ENCODE measurements at regions of chr13 and their contacts with region 1.

Region 1: GRCh38 chr13:78658635-78659449 is at the start of gene OBI1:
- DNase-seq: peak; percentile 88
- ATAC-seq: peak; percentile 98
- H3K4me3 Mint-ChIP-seq: peak within 1 kb of the TSS; percentile 100
- H3K27ac Mint-ChIP-seq: peak within 1 kb of the TSS; percentile 92
- H3K4me1 Mint-ChIP-seq: peaks cover 37% of the 10 kb centered on the region
- H3K27me3 Mint-ChIP-seq: no peaks in the 10 kb centered on the region
- CTCF ChIP-seq: no peak
- total RNA-seq, gene OBI1: 16.2 and 19.1 TPM in 2 replicates

Region 2: GRCh38 chr13:76991796-76992547 is 1666.9 kb before region 1 on chr13 and contains the start of gene CLN5:
- CTCF ChIA-PET with region 1: no interaction called
- POLR2A ChIA-PET with region 1: no interaction called
- intact Hi-C with region 1: loop called (anchors 2 kb)
- DNase-seq: peak; percentile 93
- ATAC-seq: peak; percentile 95
- H3K4me3 Mint-ChIP-seq: peak within 1 kb of the TSS; percentile 98
- H3K27ac Mint-ChIP-seq: peak within 1 kb of the TSS; percentile 97
- H3K4me1 Mint-ChIP-seq: peaks cover 34% of the 10 kb centered on the region
- H3K27me3 Mint-ChIP-seq: no peaks in the 10 kb centered on the region
- CTCF ChIP-seq: no peak
- total RNA-seq, gene CLN5: 20.6 and 23.6 TPM in 2 replicates

Region 3: GRCh38 chr13:78022164-78022877 is 636.5 kb before region 1 on chr13:
- CTCF ChIA-PET with region 1: no interaction called
- POLR2A ChIA-PET with region 1: no interaction called
- intact Hi-C with region 1: loop called (anchors 10 kb)
- DNase-seq: peak; percentile 20
- ATAC-seq: peak; percentile 99
- H3K4me3 Mint-ChIP-seq: no peak overlapping the region
- H3K27ac Mint-ChIP-seq: peak overlapping the region; percentile 19
- H3K4me1 Mint-ChIP-seq: peaks cover 19% of the 10 kb centered on the region
- H3K27me3 Mint-ChIP-seq: peaks cover 4% of the 10 kb centered on the region
- CTCF ChIP-seq: no peak

Region 4: DNA sequence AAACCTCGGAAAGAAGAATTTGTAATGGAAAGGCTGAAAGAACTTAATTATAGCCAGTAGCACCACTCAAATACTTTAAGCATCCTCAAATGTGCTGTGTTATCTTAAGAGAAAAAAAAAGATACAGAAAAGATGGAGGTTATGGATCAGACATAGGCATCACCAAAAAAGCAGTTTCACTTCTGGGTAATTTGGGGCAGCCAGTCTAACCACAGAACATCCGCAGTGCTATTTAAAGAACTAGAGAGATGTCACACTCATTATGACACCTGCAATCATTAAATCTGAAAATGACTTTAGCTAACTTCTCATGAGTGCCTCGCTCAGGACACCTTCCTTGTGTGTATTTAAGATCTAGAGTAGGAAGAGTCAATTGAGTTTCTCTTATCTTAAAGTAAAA is 535.4 kb after region 1 on chr13:
- CTCF ChIA-PET with region 1: no interaction called
- POLR2A ChIA-PET with region 1: no interaction called
- intact Hi-C with region 1: loop called (anchors 1 kb)
- DNase-seq: no peak
- ATAC-seq: peak; percentile 86
- H3K4me3 Mint-ChIP-seq: peak overlapping the region; percentile 65
- H3K27ac Mint-ChIP-seq: peak overlapping the region; percentile 65
- H3K4me1 Mint-ChIP-seq: peaks cover 70% of the 10 kb centered on the region
- H3K27me3 Mint-ChIP-seq: no peaks in the 10 kb centered on the region
- CTCF ChIP-seq: no peak

Region 5: DNA sequence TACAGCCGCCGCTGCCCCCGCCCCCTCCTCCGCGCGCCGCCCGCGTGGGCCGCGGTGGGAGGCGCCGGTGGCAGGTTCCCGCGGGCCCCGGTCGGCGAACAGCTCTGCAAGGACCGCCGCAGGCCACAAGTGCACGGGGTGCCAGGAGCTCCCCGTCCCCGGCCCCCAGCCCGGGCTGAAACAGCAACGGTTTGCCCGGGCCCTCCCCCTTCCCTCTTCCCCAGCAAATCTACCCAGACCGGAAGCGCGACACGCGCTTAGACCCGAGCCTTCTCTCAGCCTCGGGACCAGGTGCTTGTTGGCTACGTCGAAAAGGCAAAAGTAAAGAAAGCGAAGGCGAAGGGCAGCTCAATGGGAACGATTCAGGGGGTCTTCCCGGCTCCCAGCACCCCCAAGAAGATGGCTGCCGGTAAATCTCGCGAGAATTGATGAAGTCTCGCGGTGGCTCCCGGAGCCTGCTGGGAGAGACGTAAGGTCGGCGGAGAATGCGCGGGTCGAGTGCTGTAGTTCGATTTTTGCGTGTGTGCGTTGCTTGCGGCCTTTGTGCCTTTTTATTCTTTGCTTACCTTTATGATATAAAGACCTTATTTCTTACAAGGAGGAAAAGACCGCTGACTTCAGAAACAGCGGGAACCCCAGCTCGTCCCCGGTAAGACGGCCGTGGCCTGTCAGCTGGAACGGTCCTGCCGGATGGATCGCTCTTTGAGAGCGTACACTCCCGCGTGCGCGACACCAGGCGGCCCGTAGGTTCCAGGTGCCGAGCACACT is 747.2 kb after region 1 on chr13 and contains the start of gene RBM26:
- CTCF ChIA-PET with region 1: no interaction called
- POLR2A ChIA-PET with region 1: no interaction called
- intact Hi-C with region 1: loop called (anchors 2 kb)
- DNase-seq: peak; percentile 84
- ATAC-seq: peak; percentile 88
- H3K4me3 Mint-ChIP-seq: no peak within 1 kb of the TSS
- H3K27ac Mint-ChIP-seq: peak within 1 kb of the TSS; percentile 97
- H3K4me1 Mint-ChIP-seq: peaks cover 15% of the 10 kb centered on the region
- H3K27me3 Mint-ChIP-seq: no peaks in the 10 kb centered on the region
- CTCF ChIP-seq: no peak
- total RNA-seq, gene RBM26: 73.5 and 92.9 TPM in 2 replicates